HepG2 (cell line): ENCODE measurements at regions of chr11 and their contacts with region 1.

Region 1: GRCh38 chr11:23696688-23697415 is 800.0 kb upstream of the LUZP2 start:
- DNase-seq: no peak
- ATAC-seq: no peak
- H3K4me3 ChIP-seq: no peak overlapping the region
- H3K27ac ChIP-seq: no peak overlapping the region
- H3K4me1 ChIP-seq: no peaks in the 10 kb centered on the region
- H3K27me3 ChIP-seq: no peaks in the 10 kb centered on the region
- CTCF ChIP-seq: no peak
- EP300 ChIP-seq: no peak
- POLR2A ChIP-seq: no peak
- RAD21 ChIP-seq: no peak

Region 2: GRCh38 chr11:22516111-22516510 is 1180.7 kb before region 1 on chr11:
- CTCF ChIA-PET with region 1: no interaction called
- POLR2A ChIA-PET with region 1: no interaction called
- in situ Hi-C with region 1: no loop called
- intact Hi-C with region 1: loop called (anchors 5 kb)
- DNase-seq: no peak
- ATAC-seq: no peak
- H3K4me3 ChIP-seq: no peak overlapping the region
- H3K27ac ChIP-seq: no peak overlapping the region
- H3K4me1 ChIP-seq: no peaks in the 10 kb centered on the region
- H3K27me3 ChIP-seq: peaks cover 0 to 4% of the 10 kb centered on the region in 2 experiments; a peak in 1 of 5 replicates
- CTCF ChIP-seq: no peak
- EP300 ChIP-seq: no peak
- POLR2A ChIP-seq: no peak
- RAD21 ChIP-seq: no peak

Region 3: GRCh38 chr11:23543651-23544222 is 153.1 kb before region 1 on chr11:
- CTCF ChIA-PET with region 1: no interaction called
- POLR2A ChIA-PET with region 1: no interaction called
- in situ Hi-C with region 1: no loop called
- intact Hi-C with region 1: no loop called
- DNase-seq: no peak
- ATAC-seq: no peak
- H3K4me3 ChIP-seq: no peak overlapping the region
- H3K27ac ChIP-seq: no peak overlapping the region
- H3K4me1 ChIP-seq: no peaks in the 10 kb centered on the region
- H3K27me3 ChIP-seq: no peaks in the 10 kb centered on the region
- CTCF ChIP-seq: no peak
- EP300 ChIP-seq: no peak
- POLR2A ChIP-seq: no peak
- RAD21 ChIP-seq: no peak

Region 4: DNA sequence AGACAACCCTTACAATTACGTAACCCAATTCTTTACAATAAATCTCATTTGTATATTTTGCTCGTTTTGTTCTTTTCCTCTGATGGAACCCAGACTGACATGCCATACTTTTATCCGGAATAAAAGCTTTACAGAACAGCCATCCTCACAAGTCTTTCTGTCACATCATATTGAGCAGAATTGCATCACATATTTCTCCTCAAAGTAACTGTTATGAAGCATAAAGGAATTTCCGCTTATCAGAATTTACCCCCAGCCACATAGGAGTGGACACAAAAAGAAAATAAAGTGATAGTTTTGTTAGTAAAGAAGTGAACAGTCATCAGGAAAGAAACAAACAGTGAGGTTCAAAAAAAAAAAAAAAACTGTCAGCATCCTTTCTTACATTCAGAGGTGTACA is 260.5 kb after region 1 on chr11:
- CTCF ChIA-PET with region 1: no interaction called
- POLR2A ChIA-PET with region 1: no interaction called
- in situ Hi-C with region 1: no loop called
- intact Hi-C with region 1: no loop called
- DNase-seq: no peak
- ATAC-seq: no peak
- H3K4me3 ChIP-seq: no peak overlapping the region
- H3K27ac ChIP-seq: no peak overlapping the region
- H3K4me1 ChIP-seq: no peaks in the 10 kb centered on the region
- H3K27me3 ChIP-seq: no peaks in the 10 kb centered on the region
- CTCF ChIP-seq: no peak
- EP300 ChIP-seq: no peak
- POLR2A ChIP-seq: no peak
- RAD21 ChIP-seq: no peak